GM12878 (cell line): ENCODE measurements at regions of chr20 and their contacts with region 1.

Region 1: DNA sequence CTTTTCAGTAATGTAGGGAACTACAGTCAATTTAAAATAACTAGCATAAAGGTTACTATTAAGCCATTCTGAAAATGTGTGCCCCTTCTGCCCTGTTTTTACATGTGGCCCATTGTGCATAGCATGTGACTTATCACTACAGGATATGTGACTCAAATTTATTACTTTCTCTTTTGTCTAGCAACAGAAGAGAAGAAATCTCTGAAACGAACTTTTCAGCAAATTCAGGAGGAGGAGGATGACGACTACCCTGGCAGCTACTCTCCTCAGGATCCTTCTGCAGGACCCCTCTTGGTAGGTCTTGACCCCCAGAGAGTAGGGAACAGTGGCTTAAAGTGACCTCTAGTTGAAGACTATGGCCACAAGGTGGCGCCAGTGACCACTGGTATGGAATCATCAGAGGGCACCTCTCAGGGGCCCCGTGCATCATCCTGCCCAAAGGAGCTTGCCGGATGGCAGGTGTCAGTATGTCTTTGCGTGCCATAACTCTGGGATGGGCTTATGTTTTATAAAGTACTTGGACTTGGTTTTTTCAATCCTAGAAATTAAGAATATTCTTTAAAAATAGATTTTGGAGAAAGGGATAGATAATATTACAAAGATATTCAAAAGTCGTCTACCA is 23.9 kb downstream of the RPRD1B start:
- DNase-seq: no peak
- ATAC-seq: peak; percentile 96
- H3K4me3 ChIP-seq: no peak overlapping the region
- H3K27ac ChIP-seq: no peak overlapping the region
- H3K4me1 ChIP-seq: peaks cover 19% of the 10 kb centered on the region
- H3K27me3 ChIP-seq: no peaks in the 10 kb centered on the region
- CTCF ChIP-seq: peak; percentile 79 to 87 (median 84)
- EP300 ChIP-seq: no peak
- POLR2A ChIP-seq: no peak
- RAD21 ChIP-seq: peak; percentile 91

Region 2: GRCh38 chr20:37564388-37565133 is 492.9 kb before region 1 on chr20:
- CTCF ChIA-PET with region 1: interaction called, 8 read pairs
- POLR2A ChIA-PET with region 1: no interaction called
- RAD21 ChIA-PET with region 1: no interaction called
- SMC1A ChIA-PET with region 1: interaction called, 6 read pairs
- in situ Hi-C with region 1: no loop called
- intact Hi-C with region 1: loop called (anchors 5 kb)
- DNase-seq: no peak
- ATAC-seq: peak; percentile 86
- H3K4me3 ChIP-seq: no peak overlapping the region
- H3K27ac ChIP-seq: no peak overlapping the region
- H3K4me1 ChIP-seq: no peaks in the 10 kb centered on the region
- H3K27me3 ChIP-seq: peaks cover 2 to 12% of the 10 kb centered on the region in 2 experiments
- CTCF ChIP-seq: peak; percentile 87 to 95 (median 92)
- EP300 ChIP-seq: no peak
- POLR2A ChIP-seq: no peak
- RAD21 ChIP-seq: peak; percentile 96

Region 3: GRCh38 chr20:38001173-38001872 is 56.1 kb before region 1 on chr20:
- CTCF ChIA-PET with region 1: no interaction called
- POLR2A ChIA-PET with region 1: no interaction called
- RAD21 ChIA-PET with region 1: no interaction called
- SMC1A ChIA-PET with region 1: no interaction called
- in situ Hi-C with region 1: no loop called
- intact Hi-C with region 1: no loop called
- DNase-seq: no peak
- ATAC-seq: no peak
- H3K4me3 ChIP-seq: no peak overlapping the region
- H3K27ac ChIP-seq: no peak overlapping the region
- H3K4me1 ChIP-seq: no peaks in the 10 kb centered on the region
- H3K27me3 ChIP-seq: no peaks in the 10 kb centered on the region
- CTCF ChIP-seq: no peak
- EP300 ChIP-seq: no peak
- POLR2A ChIP-seq: no peak
- RAD21 ChIP-seq: no peak

Region 4: DNA sequence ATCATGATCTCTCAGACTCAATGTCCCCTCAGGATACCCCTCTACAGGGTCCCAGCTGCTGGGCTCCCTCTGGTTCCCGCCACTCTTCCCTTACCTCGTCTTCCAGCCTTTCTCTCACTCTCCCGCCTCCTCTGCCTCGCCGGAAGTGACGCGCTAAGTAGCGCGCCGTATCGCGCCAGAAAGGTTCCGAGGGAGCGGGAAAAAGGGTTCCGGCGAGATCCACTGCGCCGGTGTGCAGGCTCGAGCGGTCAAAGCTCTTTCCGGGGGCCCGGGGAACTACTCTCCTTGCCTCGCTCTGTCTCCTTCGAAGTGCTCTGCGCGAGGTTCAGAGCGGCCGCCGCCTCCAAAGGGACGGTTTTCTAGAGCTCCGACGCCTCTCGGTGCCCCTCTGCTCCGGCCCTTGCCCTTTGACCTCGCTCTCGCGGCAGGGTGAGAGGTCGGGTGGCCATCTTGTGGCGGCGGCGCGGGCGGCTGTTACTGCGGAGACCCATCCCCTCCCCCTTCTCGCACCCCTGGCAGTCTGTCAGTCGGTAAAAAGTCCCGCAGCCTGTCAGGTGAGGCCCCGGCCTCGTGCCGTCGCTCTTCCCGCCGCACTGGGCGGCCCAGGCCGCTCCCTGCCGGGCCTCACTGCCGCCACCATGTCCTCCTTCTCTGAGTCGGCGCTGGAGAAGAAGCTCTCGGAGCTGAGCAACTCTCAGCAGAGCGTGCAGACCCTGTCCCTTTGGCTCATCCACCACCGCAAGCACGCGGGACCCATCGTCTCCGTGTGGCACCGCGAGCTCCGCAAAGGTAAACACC is 24.0 kb before region 1 on chr20 and contains the starts of genes RPRD1B and TTI1:
- CTCF ChIA-PET with region 1: interaction called, 10 read pairs
- POLR2A ChIA-PET with region 1: no interaction called
- RAD21 ChIA-PET with region 1: interaction called, 4 read pairs
- SMC1A ChIA-PET with region 1: interaction called, 6 read pairs
- in situ Hi-C with region 1: no loop called
- intact Hi-C with region 1: no loop called
- DNase-seq: peak; percentile 65
- ATAC-seq: peak; percentile 83
- H3K4me3 ChIP-seq: peak within 1 kb of the TSS; percentile 91
- H3K27ac ChIP-seq: peak within 1 kb of the TSS; percentile 96
- H3K4me1 ChIP-seq: peaks cover 10% of the 10 kb centered on the region
- H3K27me3 ChIP-seq: no peaks in the 10 kb centered on the region
- CTCF ChIP-seq: no peak
- EP300 ChIP-seq: no peak
- POLR2A ChIP-seq: peak; percentile 87
- RAD21 ChIP-seq: no peak
- polyA plus RNA-seq, gene RPRD1B: 5.2 to 10.7 TPM
- polyA plus RNA-seq, gene TTI1: 5.3 to 5.5 TPM

Region 5: DNA sequence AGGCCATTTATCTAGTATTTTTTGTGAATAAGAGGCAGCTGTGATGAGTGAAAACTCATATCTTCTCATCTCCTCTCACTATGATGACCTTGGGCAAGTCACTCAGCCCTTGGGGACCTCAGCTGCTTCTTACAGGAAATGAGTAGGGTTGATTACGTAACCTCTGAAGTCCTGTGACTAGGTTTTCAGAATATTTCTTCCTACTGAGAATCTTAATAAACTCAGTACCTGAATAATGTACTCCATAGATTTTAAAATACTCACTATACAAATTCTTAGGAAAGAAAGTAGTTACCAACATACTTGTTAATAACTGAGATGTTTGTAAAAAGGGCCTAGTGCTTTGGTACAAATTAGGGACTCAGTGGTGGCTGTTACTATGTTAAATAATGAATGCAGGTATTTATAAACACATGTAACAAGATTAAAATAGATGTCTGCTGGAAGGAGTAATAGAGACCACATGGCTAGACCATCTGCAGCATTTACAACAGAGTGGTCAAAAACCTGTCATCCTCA is 37.0 kb after region 1 on chr20:
- CTCF ChIA-PET with region 1: interaction called, 13 read pairs
- POLR2A ChIA-PET with region 1: interaction called, 6 read pairs
- RAD21 ChIA-PET with region 1: interaction called, 8 read pairs
- SMC1A ChIA-PET with region 1: interaction called, 32 read pairs
- in situ Hi-C with region 1: no loop called
- intact Hi-C with region 1: no loop called
- DNase-seq: peak; percentile 73
- ATAC-seq: peak; percentile 81
- H3K4me3 ChIP-seq: no peak overlapping the region
- H3K27ac ChIP-seq: peak overlapping the region; percentile 98
- H3K4me1 ChIP-seq: peaks cover 47% of the 10 kb centered on the region
- H3K27me3 ChIP-seq: no peaks in the 10 kb centered on the region
- CTCF ChIP-seq: no peak
- EP300 ChIP-seq: peak; percentile 88 to 93
- POLR2A ChIP-seq: no peak
- RAD21 ChIP-seq: no peak

Region 6: GRCh38 chr20:38152621-38153231 is 95.3 kb after region 1 on chr20:
- CTCF ChIA-PET with region 1: interaction called, 9 read pairs
- POLR2A ChIA-PET with region 1: no interaction called
- RAD21 ChIA-PET with region 1: interaction called, 8 read pairs
- SMC1A ChIA-PET with region 1: interaction called, 10 read pairs
- in situ Hi-C with region 1: loop called (anchors 25 kb)
- intact Hi-C with region 1: no loop called
- DNase-seq: no peak
- ATAC-seq: peak; percentile 68
- H3K4me3 ChIP-seq: peak overlapping the region; percentile 17; the same call in 1 of the 2 replicates
- H3K27ac ChIP-seq: peak overlapping the region; percentile 54
- H3K4me1 ChIP-seq: peaks cover 24% of the 10 kb centered on the region
- H3K27me3 ChIP-seq: no peaks in the 10 kb centered on the region
- CTCF ChIP-seq: no peak
- EP300 ChIP-seq: no peak
- POLR2A ChIP-seq: no peak
- RAD21 ChIP-seq: no peak

Region 7: DNA sequence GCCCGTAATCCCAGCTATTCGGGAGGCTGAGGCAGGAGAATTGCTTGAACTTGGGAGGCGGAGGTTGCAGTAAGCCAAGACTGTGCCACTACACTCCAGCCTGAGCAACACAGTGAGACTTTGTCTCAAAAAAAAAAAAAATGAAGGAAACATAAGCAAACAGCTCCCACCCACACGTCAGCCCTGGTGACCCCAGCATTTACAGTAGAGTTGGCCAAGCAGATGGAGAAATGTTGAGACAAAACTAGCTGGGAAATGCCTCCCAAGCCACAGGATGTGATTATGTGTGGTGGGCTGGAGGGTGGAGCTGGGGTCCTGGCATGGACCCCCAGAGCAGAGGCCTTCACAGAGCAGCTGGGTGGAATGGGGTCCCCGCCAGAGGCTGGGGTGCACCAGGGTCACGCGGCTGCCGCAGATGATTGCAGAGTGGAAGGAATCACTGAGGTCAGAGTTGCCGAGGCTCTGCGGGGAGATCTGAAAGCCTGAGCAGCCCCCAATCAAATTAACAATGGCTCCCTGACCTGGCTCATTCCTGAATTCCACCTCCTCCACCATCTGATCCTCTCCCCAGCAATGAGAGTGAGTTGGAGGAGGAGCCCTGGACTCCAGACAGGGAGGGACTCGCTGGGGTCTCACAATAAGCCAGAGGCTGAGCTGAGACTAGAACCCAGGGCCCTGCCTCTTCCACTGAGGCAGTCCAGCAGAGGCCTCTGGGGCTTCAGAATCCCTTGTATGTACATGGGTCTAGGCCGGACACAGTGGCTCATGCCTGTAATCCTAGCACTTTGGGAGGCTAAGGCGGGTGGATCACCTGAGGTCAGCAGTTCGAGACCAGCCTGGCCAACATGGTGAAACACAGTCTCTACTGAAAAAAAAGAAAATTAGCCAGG is 142.3 kb after region 1 on chr20:
- CTCF ChIA-PET with region 1: no interaction called
- POLR2A ChIA-PET with region 1: no interaction called
- RAD21 ChIA-PET with region 1: no interaction called
- SMC1A ChIA-PET with region 1: no interaction called
- in situ Hi-C with region 1: no loop called
- intact Hi-C with region 1: no loop called
- DNase-seq: no peak
- ATAC-seq: no peak
- H3K4me3 ChIP-seq: no peak overlapping the region
- H3K27ac ChIP-seq: no peak overlapping the region
- H3K4me1 ChIP-seq: no peaks in the 10 kb centered on the region; the same call in 1 of the 2 replicates
- H3K27me3 ChIP-seq: no peaks in the 10 kb centered on the region; a peak in 1 of 4 replicates
- CTCF ChIP-seq: no peak
- EP300 ChIP-seq: no peak
- POLR2A ChIP-seq: no peak
- RAD21 ChIP-seq: no peak

Region 8: DNA sequence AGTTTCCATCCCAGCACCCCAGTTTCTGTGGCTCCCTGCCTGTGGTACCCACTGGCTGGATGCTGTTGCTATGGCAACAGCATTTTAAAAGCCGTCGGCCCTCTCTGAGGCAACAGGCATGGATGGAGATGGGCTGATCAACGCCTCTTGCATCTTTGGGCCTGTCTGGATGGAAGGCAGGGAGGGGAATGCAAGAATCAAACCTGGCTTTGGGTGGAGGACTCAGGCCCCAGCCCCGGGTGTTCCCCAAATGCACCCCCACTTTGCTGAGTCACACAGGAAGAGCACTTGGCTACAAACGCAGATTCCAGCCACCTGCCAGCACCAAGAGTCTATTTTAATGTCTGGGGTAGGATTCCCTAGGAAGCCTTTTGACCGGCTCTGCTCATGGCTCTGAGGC is 153.3 kb after region 1 on chr20:
- CTCF ChIA-PET with region 1: interaction called, 404 read pairs
- POLR2A ChIA-PET with region 1: no interaction called
- RAD21 ChIA-PET with region 1: interaction called, 4 read pairs
- SMC1A ChIA-PET with region 1: interaction called, 4 read pairs
- in situ Hi-C with region 1: loop called (anchors 5 kb)
- intact Hi-C with region 1: no loop called
- DNase-seq: no peak
- ATAC-seq: no peak
- H3K4me3 ChIP-seq: no peak overlapping the region
- H3K27ac ChIP-seq: no peak overlapping the region
- H3K4me1 ChIP-seq: no peaks in the 10 kb centered on the region
- H3K27me3 ChIP-seq: no peaks in the 10 kb centered on the region; a peak in 1 of 4 replicates
- CTCF ChIP-seq: no peak
- EP300 ChIP-seq: no peak
- POLR2A ChIP-seq: no peak
- RAD21 ChIP-seq: no peak